Heart right ventricle (tissue), 16 donors: ENCODE measurements at regions of chr17 and their contacts with region 1.

Region 1: DNA sequence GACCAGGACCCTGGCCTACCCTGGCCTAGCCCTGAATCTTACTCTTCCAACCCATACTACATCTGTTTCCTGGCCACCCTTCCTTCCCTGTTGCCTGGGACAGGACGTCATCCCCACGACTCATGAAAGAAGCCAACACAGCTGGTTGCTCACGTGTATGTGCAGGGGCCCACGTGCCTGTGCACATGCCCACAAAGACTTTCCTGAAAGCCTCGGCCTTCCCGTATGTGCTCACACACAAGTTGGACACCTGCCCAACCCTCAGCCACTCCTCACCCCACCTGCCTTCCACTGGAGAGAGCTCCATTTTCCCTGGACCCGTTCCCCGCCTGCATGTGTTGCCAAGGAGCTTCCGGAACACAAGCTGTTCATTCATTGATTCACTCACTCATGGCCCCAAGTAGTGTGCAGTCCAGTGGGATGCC is 7.0 kb downstream of the PLXDC1 start:
- DNase-seq: peak; percentile 81 to 92
- ATAC-seq: peak; percentile 81 to 92 (median 88)
- H3K4me3 ChIP-seq: no peak overlapping the region
- H3K27ac ChIP-seq: peak overlapping the region; percentile 44 to 90 (median 82)
- H3K4me1 ChIP-seq: peaks cover 0 to 50% (median 20%) of the 10 kb centered on the region in 9 donors
- H3K27me3 ChIP-seq: peaks cover 0 to 4% (median 0%) of the 10 kb centered on the region in 7 donors
- CTCF ChIP-seq: no peak

Region 2: GRCh38 chr17:39099663-39100286 is 44.7 kb before region 1 on chr17:
- intact Hi-C with region 1: loop called in 2 of 10 experiments (anchors 5 to 10 kb)
- DNase-seq: peak; percentile 37 to 90
- ATAC-seq: peak; percentile 48 to 76 (median 64)
- H3K4me3 ChIP-seq: no peak overlapping the region
- H3K27ac ChIP-seq: peak overlapping the region in 9 of 10 donors; percentile 29 to 85 (median 69)
- H3K4me1 ChIP-seq: peaks cover 7 to 66% (median 53%) of the 10 kb centered on the region in 9 donors
- H3K27me3 ChIP-seq: no peaks in the 10 kb centered on the region
- CTCF ChIP-seq: no peak

Region 3: DNA sequence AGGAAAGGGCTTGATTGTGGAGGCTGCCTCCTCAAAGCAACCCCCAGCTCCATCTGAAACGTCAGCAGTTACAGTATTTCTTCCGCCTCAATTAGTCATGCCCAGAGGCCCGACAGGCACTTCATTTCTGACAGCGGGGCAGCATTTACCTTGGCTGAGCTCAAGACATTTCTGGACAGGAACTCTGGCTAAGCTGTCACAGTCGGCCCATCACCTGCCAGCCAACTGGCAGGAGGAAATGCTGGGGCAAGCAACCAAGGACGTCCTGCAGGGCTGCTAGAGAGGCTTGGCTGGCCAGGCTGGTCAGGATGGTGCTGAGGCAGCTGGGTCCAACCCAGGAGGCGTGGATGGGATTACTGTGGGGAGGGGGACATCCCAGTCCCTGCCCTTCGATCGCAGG is 20.8 kb before region 1 on chr17:
- intact Hi-C with region 1: no loop called
- DNase-seq: peak in 1 of 2 donors; percentile 30
- ATAC-seq: peak in 5 of 8 donors; percentile 44 to 80 (median 51)
- H3K4me3 ChIP-seq: no peak overlapping the region
- H3K27ac ChIP-seq: no peak overlapping the region
- H3K4me1 ChIP-seq: peaks cover 0 to 7% (median 0%) of the 10 kb centered on the region in 9 donors
- H3K27me3 ChIP-seq: no peaks in the 10 kb centered on the region
- CTCF ChIP-seq: no peak